ENCODE measurements at regions of chr17 and their contacts with region 1.

Region 1: GRCh38 chr17:37816950-37817349 is 72.1 kb upstream of the HNF1B start:
- DNase-seq: no peak
- ATAC-seq: no peak
- H3K4me3 Mint-ChIP-seq: no peak overlapping the region
- H3K27ac Mint-ChIP-seq: no peak overlapping the region; the same call in 1 of the 2 replicates
- H3K4me1 Mint-ChIP-seq: peaks cover 3% of the 10 kb centered on the region
- H3K27me3 Mint-ChIP-seq: no peaks in the 10 kb centered on the region
- CTCF ChIP-seq: no peak

Region 2: DNA sequence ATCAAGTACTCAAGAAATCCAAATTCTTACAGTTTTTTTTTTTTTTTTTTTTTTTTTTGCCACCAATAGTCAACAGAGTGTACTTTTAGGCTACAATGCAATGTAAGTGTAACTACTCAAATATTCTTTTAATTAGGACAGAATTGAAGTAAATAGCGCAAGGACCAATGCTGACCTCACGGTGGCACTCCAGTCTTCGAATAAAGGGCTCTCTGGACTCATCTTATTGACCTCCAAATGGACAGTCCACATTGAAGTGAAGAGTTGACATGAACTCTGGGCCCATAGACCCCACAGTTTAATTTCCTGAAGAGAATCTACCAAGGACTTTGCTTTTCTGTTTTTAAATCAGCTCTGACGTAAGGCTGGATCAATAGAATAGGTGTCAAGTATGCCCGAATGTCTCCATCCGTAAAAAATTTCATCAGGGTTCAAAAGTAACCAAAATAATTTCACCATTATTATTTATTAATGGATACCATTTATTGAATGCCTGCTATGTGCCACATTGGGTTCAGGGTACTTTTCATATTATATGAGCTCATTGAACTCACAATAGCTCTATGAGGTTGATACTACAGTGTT is 166.4 kb before region 1 on chr17:
- CTCF ChIA-PET with region 1: interaction called, 46 read pairs
- POLR2A ChIA-PET with region 1: no interaction called
- DNase-seq: peak; percentile 43
- ATAC-seq: peak; percentile 55; the same call in 1 of the 2 replicates
- H3K4me3 Mint-ChIP-seq: no peak overlapping the region
- H3K27ac Mint-ChIP-seq: no peak overlapping the region
- H3K4me1 Mint-ChIP-seq: no peaks in the 10 kb centered on the region
- H3K27me3 Mint-ChIP-seq: peaks cover 23% of the 10 kb centered on the region
- CTCF ChIP-seq: no peak

Region 3: GRCh38 chr17:37725021-37725595 is 91.8 kb before region 1 on chr17:
- CTCF ChIA-PET with region 1: no interaction called
- POLR2A ChIA-PET with region 1: no interaction called
- DNase-seq: no peak
- ATAC-seq: no peak
- H3K4me3 Mint-ChIP-seq: no peak overlapping the region
- H3K27ac Mint-ChIP-seq: no peak overlapping the region
- H3K4me1 Mint-ChIP-seq: peaks cover 11% of the 10 kb centered on the region
- H3K27me3 Mint-ChIP-seq: peaks cover 2% of the 10 kb centered on the region
- CTCF ChIP-seq: no peak

Region 4: DNA sequence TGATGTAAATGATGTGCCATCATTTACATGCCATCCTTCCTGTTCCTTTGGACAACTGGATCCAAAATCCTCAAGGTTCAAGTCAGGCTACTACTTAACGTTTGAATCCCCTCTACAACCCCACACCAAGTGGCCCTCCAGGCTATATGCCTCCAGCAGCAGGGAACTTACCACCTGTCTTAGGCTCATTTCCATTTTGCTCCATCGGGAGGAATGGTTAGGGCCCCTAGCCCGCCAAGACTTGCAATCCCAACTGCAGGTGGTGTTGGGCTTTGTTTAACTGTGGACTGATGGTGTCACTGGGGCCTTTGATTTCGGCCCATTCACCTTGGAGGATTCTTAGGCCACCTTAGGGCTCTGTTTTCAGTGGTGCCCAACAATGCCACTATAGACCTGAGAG is 81.8 kb before region 1 on chr17:
- CTCF ChIA-PET with region 1: no interaction called
- POLR2A ChIA-PET with region 1: no interaction called
- DNase-seq: peak; percentile 37
- ATAC-seq: peak; percentile 73
- H3K4me3 Mint-ChIP-seq: no peak overlapping the region
- H3K27ac Mint-ChIP-seq: no peak overlapping the region
- H3K4me1 Mint-ChIP-seq: peaks cover 7% of the 10 kb centered on the region; the same call in 1 of the 2 replicates
- H3K27me3 Mint-ChIP-seq: peaks cover 70% of the 10 kb centered on the region
- CTCF ChIP-seq: no peak

Region 5: GRCh38 chr17:37770631-37771518 is 46.1 kb before region 1 on chr17:
- CTCF ChIA-PET with region 1: interaction called, 10 read pairs
- POLR2A ChIA-PET with region 1: no interaction called
- DNase-seq: peak; percentile 80
- ATAC-seq: peak; percentile 86
- H3K4me3 Mint-ChIP-seq: no peak overlapping the region
- H3K27ac Mint-ChIP-seq: no peak overlapping the region
- H3K4me1 Mint-ChIP-seq: no peaks in the 10 kb centered on the region
- H3K27me3 Mint-ChIP-seq: peaks cover 7% of the 10 kb centered on the region
- CTCF ChIP-seq: peak; percentile 65

Region 6: DNA sequence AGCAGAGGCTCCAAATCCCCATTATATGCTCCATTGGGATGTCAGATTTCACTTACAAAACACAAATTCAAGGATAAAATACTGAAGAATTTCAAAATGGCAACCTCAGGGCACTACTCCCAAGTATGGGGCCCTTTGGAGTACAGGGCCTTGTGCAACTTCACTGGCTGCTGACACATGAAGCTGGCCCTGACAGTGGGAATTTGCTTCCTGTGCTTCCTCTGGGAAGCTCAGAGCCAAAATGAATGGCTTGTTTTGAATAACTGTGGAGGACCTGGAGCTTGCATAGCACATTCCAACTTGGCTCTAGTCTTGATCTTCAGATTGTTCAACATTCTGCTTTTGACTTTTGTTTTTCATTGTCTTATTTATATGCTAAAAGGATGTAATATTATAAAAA is 19.7 kb before region 1 on chr17:
- CTCF ChIA-PET with region 1: interaction called, 27 read pairs
- POLR2A ChIA-PET with region 1: interaction called, 4 read pairs
- DNase-seq: no peak
- ATAC-seq: peak; percentile 30
- H3K4me3 Mint-ChIP-seq: no peak overlapping the region
- H3K27ac Mint-ChIP-seq: no peak overlapping the region
- H3K4me1 Mint-ChIP-seq: peaks cover 10% of the 10 kb centered on the region
- H3K27me3 Mint-ChIP-seq: no peaks in the 10 kb centered on the region
- CTCF ChIP-seq: no peak

Region 7: DNA sequence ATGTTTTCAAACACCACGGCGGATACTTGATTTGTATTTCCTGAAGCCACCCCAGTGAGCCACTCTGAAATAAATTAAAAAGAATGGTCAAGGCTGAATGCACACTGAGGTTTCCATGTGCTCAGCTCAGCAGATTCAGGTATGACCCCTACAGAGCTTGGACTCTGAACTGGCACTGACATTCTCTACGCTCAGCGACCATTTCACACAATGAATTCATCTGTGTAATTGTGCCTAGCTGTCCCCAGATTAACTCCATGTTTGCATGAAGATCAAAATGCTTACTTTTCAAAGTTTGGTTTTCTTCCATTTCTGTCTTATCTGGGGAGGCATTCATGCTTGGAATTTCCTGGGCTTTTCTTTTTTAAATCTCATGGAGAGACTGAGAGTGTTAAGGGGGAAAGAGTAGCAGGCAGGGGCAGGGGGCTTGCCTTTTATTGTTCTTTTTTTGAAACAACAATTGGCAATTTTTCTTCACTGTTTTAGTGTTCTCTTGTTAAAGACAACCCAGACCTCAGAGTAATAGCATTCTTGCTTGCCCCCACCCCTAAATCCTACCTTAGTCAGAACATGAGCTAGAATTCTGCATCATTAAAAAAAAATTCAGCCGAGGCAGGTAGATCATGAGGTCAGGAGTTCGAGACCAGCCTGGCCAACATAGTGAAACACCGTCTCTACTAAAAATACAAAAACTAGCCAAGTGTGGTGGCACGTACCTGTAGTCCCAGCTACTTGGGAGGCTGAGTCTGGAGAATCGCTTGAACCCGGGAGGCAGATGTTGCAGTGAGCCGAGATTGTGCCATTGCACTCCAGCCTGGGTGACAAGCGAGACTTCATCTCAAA is 13.4 kb after region 1 on chr17:
- CTCF ChIA-PET with region 1: interaction called, 21 read pairs
- POLR2A ChIA-PET with region 1: no interaction called
- DNase-seq: no peak
- ATAC-seq: no peak
- H3K4me3 Mint-ChIP-seq: no peak overlapping the region
- H3K27ac Mint-ChIP-seq: no peak overlapping the region
- H3K4me1 Mint-ChIP-seq: peaks cover 27% of the 10 kb centered on the region
- H3K27me3 Mint-ChIP-seq: no peaks in the 10 kb centered on the region
- CTCF ChIP-seq: no peak

Measured in WTC11 (cell line).